Activated B cell treated with CpG ODN at 0.5 μM for 24 hours (primary cell): ENCODE measurements at regions of chr2 and their contacts with region 1.

Region 1: DNA sequence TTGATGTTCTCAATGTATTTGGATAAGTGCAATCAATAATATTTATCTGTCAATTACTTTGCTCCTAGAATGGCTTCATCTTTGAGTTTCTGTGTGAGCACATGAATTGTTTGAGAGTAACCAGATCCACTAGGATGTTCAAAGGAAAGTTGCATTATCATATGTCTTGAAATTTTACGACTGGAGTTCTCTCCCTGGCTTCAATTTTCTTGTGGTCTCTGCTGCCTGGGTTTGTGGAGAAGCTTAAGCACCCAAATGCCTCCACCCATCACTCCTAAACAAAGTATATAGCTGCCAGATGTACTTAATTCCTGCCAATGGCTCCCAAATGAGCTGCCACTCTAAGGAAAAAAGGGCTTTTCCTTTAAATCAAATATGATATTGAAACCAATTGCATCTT is 1149.4 kb upstream of the ZEB2 start:
- DNase-seq: no peak
- ATAC-seq: no peak
- H3K4me3 Mint-ChIP-seq: no peak overlapping the region
- H3K27ac Mint-ChIP-seq: no peak overlapping the region
- H3K4me1 Mint-ChIP-seq: peaks cover 26% of the 10 kb centered on the region
- H3K27me3 Mint-ChIP-seq: no peaks in the 10 kb centered on the region
- CTCF ChIP-seq: no peak

Region 2: GRCh38 chr2:145157741-145158591 is 511.3 kb before region 1 on chr2:
- CTCF ChIA-PET with region 1: no interaction called
- POLR2A ChIA-PET with region 1: no interaction called
- intact Hi-C with region 1: no loop called
- DNase-seq: no peak
- ATAC-seq: no peak
- H3K4me3 Mint-ChIP-seq: no peak overlapping the region
- H3K27ac Mint-ChIP-seq: no peak overlapping the region
- H3K4me1 Mint-ChIP-seq: peaks cover 8% of the 10 kb centered on the region
- H3K27me3 Mint-ChIP-seq: no peaks in the 10 kb centered on the region
- CTCF ChIP-seq: no peak

Region 3: GRCh38 chr2:145654746-145655145 is 14.6 kb before region 1 on chr2:
- CTCF ChIA-PET with region 1: no interaction called
- POLR2A ChIA-PET with region 1: interaction called, 3 read pairs
- intact Hi-C with region 1: loop called (anchors 2 kb)
- DNase-seq: no peak
- ATAC-seq: no peak
- H3K4me3 Mint-ChIP-seq: no peak overlapping the region
- H3K27ac Mint-ChIP-seq: no peak overlapping the region
- H3K4me1 Mint-ChIP-seq: peaks cover 6% of the 10 kb centered on the region
- H3K27me3 Mint-ChIP-seq: no peaks in the 10 kb centered on the region
- CTCF ChIP-seq: no peak